Heart right ventricle (tissue), 16 donors: ENCODE measurements at regions of chr3 and their contacts with region 1.

Region 1: GRCh38 chr3:55485211-55485791 is 1.8 kb downstream of the WNT5A start:
- DNase-seq: peak; percentile 68 to 77
- ATAC-seq: peak; percentile 62 to 87 (median 82)
- H3K4me3 ChIP-seq: peak overlapping the region; percentile 33 to 72 (median 68)
- H3K27ac ChIP-seq: peak overlapping the region in 9 of 10 donors; percentile 34 to 76 (median 69)
- H3K4me1 ChIP-seq: peaks cover 0 to 49% (median 34%) of the 10 kb centered on the region in 9 donors
- H3K27me3 ChIP-seq: peaks cover 0 to 98% (median 58%) of the 10 kb centered on the region in 7 donors
- CTCF ChIP-seq: peak; percentile 50 to 80 (median 77)

Region 2: DNA sequence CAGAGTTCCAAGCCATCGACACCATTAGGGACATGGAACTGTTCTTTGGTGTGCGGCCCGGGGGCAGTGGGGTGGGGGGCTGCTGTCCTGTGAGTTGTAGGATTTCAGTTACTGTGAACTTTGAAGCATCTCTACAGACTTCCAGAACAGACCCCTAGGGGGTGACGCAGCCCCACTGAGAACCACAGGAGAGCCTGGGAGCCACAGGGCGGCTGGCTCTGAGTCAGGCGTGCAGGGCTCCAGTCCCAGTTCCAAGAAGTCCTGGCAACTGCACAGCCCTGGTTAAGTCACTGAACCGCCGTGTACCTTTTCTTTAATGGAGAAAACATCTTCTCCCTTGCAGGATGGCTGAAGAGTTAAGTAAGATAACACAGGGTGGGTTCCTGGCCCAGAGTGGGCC is 533.9 kb before region 1 on chr3:
- intact Hi-C with region 1: loop called in 2 of 10 experiments (anchors 5 kb)
- DNase-seq: peak; percentile 71 to 75
- ATAC-seq: peak; percentile 91 to 99 (median 96)
- H3K4me3 ChIP-seq: no peak overlapping the region
- H3K27ac ChIP-seq: no peak overlapping the region
- H3K4me1 ChIP-seq: peaks cover 0 to 27% (median 4%) of the 10 kb centered on the region in 9 donors
- H3K27me3 ChIP-seq: no peaks in the 10 kb centered on the region
- CTCF ChIP-seq: peak; percentile 19 to 73 (median 67)

Region 3: GRCh38 chr3:55128231-55128791 is 357.0 kb before region 1 on chr3:
- intact Hi-C with region 1: no loop called
- DNase-seq: no peak
- ATAC-seq: no peak
- H3K4me3 ChIP-seq: no peak overlapping the region
- H3K27ac ChIP-seq: no peak overlapping the region
- H3K4me1 ChIP-seq: no peaks in the 10 kb centered on the region
- H3K27me3 ChIP-seq: peaks cover 0 to 21% (median 10%) of the 10 kb centered on the region in 7 donors
- CTCF ChIP-seq: no peak

Region 4: GRCh38 chr3:55434789-55435188 is 50.5 kb before region 1 on chr3:
- intact Hi-C with region 1: no loop called
- DNase-seq: no peak
- ATAC-seq: no peak
- H3K4me3 ChIP-seq: no peak overlapping the region
- H3K27ac ChIP-seq: no peak overlapping the region
- H3K4me1 ChIP-seq: no peaks in the 10 kb centered on the region
- H3K27me3 ChIP-seq: peaks cover 0 to 15% (median 6%) of the 10 kb centered on the region in 7 donors
- CTCF ChIP-seq: peak in 4 of 9 donors; percentile 10 to 47 (median 26)

Region 5: GRCh38 chr3:55721716-55722484 is 236.6 kb after region 1 on chr3:
- intact Hi-C with region 1: loop called in 7 of 10 experiments (anchors 5 to 10 kb)
- DNase-seq: peak in 1 of 2 donors; percentile 12
- ATAC-seq: peak in 2 of 8 donors; percentile 17 to 52
- H3K4me3 ChIP-seq: no peak overlapping the region
- H3K27ac ChIP-seq: no peak overlapping the region
- H3K4me1 ChIP-seq: peaks cover 0 to 7% (median 0%) of the 10 kb centered on the region in 9 donors
- H3K27me3 ChIP-seq: peaks cover 0 to 41% (median 11%) of the 10 kb centered on the region in 7 donors
- CTCF ChIP-seq: peak in 7 of 9 donors; percentile 33 to 57 (median 48)

Region 6: DNA sequence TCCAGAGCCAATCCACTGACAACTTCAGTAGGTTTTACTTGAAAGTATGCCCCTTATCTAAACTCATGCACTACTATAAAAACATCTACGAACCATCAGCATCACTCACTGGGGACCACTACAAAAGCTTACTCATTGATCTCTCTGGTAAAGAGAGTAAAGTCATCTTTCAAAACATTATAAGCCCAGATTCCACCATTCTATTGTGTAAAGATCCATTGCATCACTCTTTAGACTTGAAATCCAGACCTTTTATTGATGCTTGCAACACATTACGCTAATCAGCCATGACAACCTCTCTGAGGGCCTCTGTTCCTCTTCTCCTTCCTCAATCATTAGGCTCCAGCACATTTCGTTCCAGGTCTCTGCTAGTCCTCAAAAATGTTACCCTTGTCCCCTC is 250.7 kb after region 1 on chr3:
- intact Hi-C with region 1: no loop called
- DNase-seq: no peak
- ATAC-seq: no peak
- H3K4me3 ChIP-seq: no peak overlapping the region
- H3K27ac ChIP-seq: no peak overlapping the region
- H3K4me1 ChIP-seq: no peaks in the 10 kb centered on the region
- H3K27me3 ChIP-seq: peaks cover 0 to 3% (median 0%) of the 10 kb centered on the region in 7 donors
- CTCF ChIP-seq: no peak

Region 7: DNA sequence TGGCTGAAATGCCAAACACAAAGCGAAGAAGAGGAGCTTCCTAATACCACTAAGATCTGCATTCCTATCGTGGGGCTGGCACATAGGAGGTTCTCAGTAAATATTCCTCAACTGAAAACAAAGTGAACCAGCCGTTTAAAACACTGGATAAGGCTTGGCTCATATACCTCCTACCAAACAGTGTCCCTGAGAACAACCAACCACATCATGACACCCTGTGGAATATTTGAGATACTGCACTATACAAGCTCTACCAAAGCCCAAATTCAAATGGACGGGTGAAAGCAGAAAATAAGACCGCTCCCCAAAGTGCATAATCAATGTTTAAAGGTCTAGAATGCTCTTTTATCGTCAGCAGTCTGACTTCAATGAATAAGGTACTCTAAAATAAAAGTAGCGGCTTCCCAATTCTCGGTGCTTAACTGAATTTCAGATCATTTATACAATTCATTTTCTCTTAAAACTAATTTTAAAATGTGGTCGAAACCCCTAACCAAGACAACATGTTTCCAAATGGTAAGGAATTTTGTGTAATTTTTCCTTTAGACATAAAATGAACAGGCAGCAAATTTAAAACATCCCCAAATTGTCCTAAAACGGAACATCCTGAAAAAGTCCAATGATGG is 557.1 kb after region 1 on chr3:
- intact Hi-C with region 1: loop called (anchors 5 to 10 kb)
- DNase-seq: no peak
- ATAC-seq: peak in 6 of 8 donors; percentile 57 to 82 (median 64)
- H3K4me3 ChIP-seq: no peak overlapping the region
- H3K27ac ChIP-seq: no peak overlapping the region
- H3K4me1 ChIP-seq: no peaks in the 10 kb centered on the region
- H3K27me3 ChIP-seq: peaks cover 0 to 45% (median 11%) of the 10 kb centered on the region in 7 donors
- CTCF ChIP-seq: peak in 8 of 9 donors; percentile 33 to 66 (median 54)